ENCODE measurements at regions of chr17 and their contacts with region 1.

Region 1: GRCh38 chr17:301681-302298 is 50.8 kb downstream of the RPH3AL start:
- DNase-seq: peak; percentile 52 to 81 (median 74)
- ATAC-seq: peak; percentile 34 to 82 (median 71)
- H3K4me3 ChIP-seq: peak overlapping the region in 4 of 12 donors; percentile 3 to 31 (median 12)
- H3K27ac ChIP-seq: peak overlapping the region; percentile 44 to 86 (median 77)
- H3K4me1 ChIP-seq: peaks cover 0 to 42% (median 16%) of the 10 kb centered on the region in 12 donors
- H3K27me3 ChIP-seq: peaks cover 0 to 4% (median 0%) of the 10 kb centered on the region in 9 donors
- CTCF ChIP-seq: no peak
- POLR2A ChIP-seq: no peak

Region 2: GRCh38 chr17:233473-233941 is 68.3 kb before region 1 on chr17:
- intact Hi-C with region 1: loop called in 1 of 10 experiments (anchors 5 kb)
- DNase-seq: peak in 4 of 5 donors; percentile 26 to 66 (median 44)
- ATAC-seq: peak in 3 of 4 donors; percentile 9 to 48 (median 40)
- H3K4me3 ChIP-seq: peak overlapping the region in 9 of 12 donors; percentile 1 to 39 (median 26)
- H3K27ac ChIP-seq: peak overlapping the region; percentile 63 to 89 (median 81)
- H3K4me1 ChIP-seq: peaks cover 0 to 29% (median 7%) of the 10 kb centered on the region in 12 donors
- H3K27me3 ChIP-seq: peaks cover 0 to 2% (median 0%) of the 10 kb centered on the region in 9 donors
- CTCF ChIP-seq: no peak
- POLR2A ChIP-seq: no peak

Region 3: GRCh38 chr17:266701-267667 is 34.8 kb before region 1 on chr17:
- intact Hi-C with region 1: loop called in 1 of 10 experiments (anchors 5 kb)
- DNase-seq: peak; percentile 72 to 82 (median 76)
- ATAC-seq: peak; percentile 84 to 95 (median 94)
- H3K4me3 ChIP-seq: peak overlapping the region in 4 of 12 donors; percentile 12 to 16 (median 14)
- H3K27ac ChIP-seq: peak overlapping the region; percentile 29 to 95 (median 79)
- H3K4me1 ChIP-seq: peaks cover 0 to 32% (median 20%) of the 10 kb centered on the region in 12 donors
- H3K27me3 ChIP-seq: no peaks in the 10 kb centered on the region
- CTCF ChIP-seq: peak in 1 of 12 donors; percentile 12
- POLR2A ChIP-seq: no peak

Region 4: DNA sequence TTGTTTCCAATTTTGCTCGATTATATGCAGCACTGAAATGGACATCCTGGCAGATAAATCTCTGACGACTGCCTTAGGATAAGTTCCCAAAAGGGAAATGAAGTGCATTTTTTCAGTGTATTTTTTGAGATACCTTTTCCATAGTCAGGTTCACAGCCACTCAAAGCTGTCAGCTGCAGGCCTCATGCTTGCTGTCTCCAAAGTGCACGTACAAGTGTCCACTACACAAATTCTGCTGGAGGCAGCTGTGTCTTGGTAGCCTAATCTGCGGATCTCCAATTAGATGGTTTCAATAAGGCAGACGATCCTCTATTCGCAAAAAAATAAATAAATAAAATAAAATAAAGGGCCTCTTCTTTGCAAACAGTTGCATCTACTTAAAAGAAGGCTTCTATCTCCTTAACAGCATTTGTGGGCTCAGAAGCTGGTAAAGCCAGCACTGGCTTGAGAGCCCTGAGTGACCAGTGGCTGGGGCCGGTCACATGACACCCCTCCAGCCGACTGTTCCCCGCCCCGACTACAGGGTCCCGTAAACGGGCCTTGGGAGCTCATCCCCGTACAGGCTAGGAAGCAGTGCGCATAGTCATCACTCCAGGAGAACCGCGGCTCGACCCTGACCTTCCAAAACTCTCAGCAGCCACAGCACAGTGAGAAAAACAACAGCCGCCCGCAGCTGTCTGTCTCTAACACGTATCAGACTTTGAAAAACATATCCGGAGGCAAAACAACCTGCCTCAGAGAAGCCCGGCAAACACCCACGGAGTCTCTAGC is 32.0 kb after region 1 on chr17:
- intact Hi-C with region 1: loop called in 1 of 10 experiments (anchors 2 kb)
- DNase-seq: peak; percentile 83 to 91 (median 88)
- ATAC-seq: peak; percentile 81 to 87 (median 84)
- H3K4me3 ChIP-seq: peak overlapping the region in 11 of 12 donors; percentile 17 to 67 (median 55)
- H3K27ac ChIP-seq: peak overlapping the region; percentile 81 to 99 (median 92)
- H3K4me1 ChIP-seq: peaks cover 0 to 50% (median 26%) of the 10 kb centered on the region in 12 donors
- H3K27me3 ChIP-seq: peaks cover 0 to 10% (median 0%) of the 10 kb centered on the region in 9 donors
- CTCF ChIP-seq: no peak
- POLR2A ChIP-seq: peak in 1 of 2 donors; percentile 85

Region 5: DNA sequence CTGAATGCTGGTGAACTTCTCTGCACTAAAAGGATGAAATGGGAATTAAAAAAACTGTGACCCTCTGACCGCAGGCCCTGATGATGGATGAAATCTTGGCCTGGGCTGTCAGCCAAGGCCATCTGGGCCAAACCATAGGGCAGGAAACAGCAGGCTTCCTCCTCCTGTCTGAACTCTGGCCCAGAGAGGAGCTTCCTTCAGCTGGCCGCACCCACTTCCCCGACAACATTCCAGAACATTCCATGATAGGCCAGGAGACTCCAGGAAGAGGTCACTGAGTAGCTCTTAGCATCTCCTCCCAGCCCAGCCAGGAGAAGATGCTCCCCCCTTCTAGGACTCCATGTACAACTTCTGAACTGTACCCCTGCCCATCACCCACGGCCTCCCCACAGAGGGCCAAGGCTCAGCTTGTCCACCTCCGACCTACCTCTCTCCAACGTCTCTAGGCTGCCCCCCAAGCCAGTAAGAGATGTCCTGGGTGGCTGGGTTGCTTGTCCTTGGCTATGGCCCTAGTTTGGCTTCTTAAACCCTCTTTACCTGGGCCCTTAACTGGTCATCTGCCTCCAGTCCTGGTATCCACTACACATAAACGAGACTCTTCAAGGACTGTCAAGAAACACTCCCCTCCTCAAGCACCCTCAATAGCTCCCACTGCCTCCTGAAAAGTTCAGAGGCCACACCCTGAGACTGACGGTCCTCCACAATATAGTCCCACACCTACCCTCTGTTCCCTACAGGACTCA is 49.1 kb after region 1 on chr17:
- intact Hi-C with region 1: loop called in 1 of 10 experiments (anchors 5 kb)
- DNase-seq: peak; percentile 87 to 94 (median 91)
- ATAC-seq: peak; percentile 85 to 92 (median 88)
- H3K4me3 ChIP-seq: no peak overlapping the region
- H3K27ac ChIP-seq: peak overlapping the region; percentile 76 to 97 (median 92)
- H3K4me1 ChIP-seq: peaks cover 14 to 61% (median 50%) of the 10 kb centered on the region in 12 donors
- H3K27me3 ChIP-seq: no peaks in the 10 kb centered on the region
- CTCF ChIP-seq: no peak
- POLR2A ChIP-seq: peak in 1 of 2 donors; percentile 35

Region 6: DNA sequence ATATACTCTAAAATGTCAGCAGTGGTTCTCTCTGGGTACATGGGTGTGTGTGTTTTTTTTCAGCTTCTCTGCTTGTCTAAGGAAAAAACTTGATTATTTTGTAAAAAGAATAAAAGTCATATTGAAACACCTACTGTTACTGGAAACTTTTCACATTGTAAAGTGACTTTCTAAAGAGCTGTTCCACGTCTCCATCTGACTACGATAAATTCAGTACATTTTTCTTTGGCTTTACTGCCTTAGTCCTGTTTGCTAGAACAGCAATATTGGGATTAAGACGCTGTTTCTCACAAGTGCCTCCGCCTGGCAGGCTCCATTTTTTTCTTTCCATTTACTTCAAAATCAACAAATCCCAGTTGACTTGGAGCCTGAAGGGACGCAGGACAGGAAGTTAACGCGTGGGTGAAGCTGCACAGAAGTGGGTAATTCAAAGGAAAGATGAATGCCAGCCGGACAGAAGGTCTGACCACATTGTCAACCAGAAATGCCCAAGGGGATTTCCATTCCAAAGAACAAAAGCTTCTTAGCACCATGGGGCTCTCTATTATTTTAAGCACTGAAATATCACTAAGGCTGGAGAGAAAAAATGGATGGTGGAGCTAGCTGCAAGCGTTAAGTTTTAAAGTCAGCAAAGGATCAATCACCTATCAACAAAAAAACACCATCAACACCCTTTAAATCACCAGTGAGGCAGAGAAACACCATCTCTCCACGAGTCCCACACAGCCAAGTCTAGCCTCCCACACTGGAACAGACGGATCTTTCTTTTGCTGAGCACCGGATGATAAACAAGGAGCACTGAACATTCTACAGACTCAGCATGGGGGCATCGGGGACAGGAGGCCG is 471.9 kb after region 1 on chr17:
- intact Hi-C with region 1: no loop called
- DNase-seq: no peak
- ATAC-seq: no peak
- H3K4me3 ChIP-seq: no peak overlapping the region
- H3K27ac ChIP-seq: no peak overlapping the region
- H3K4me1 ChIP-seq: no peaks in the 10 kb centered on the region
- H3K27me3 ChIP-seq: no peaks in the 10 kb centered on the region
- CTCF ChIP-seq: no peak
- POLR2A ChIP-seq: no peak